Activated T-helper 2 cell treated with anti-CD3 and anti-CD28 coated beads, Interferon-gamma antibody, Interleukin-2, Interleukin-4, amounts not matched to agents 10 μg/mL and 5 μg/mL and 100 μg/mL, durations not matched to agents 14 hours and 24 hours and 36 hours (primary cell): ENCODE measurements at regions of chr3 and their contacts with region 1.

Region 1: DNA sequence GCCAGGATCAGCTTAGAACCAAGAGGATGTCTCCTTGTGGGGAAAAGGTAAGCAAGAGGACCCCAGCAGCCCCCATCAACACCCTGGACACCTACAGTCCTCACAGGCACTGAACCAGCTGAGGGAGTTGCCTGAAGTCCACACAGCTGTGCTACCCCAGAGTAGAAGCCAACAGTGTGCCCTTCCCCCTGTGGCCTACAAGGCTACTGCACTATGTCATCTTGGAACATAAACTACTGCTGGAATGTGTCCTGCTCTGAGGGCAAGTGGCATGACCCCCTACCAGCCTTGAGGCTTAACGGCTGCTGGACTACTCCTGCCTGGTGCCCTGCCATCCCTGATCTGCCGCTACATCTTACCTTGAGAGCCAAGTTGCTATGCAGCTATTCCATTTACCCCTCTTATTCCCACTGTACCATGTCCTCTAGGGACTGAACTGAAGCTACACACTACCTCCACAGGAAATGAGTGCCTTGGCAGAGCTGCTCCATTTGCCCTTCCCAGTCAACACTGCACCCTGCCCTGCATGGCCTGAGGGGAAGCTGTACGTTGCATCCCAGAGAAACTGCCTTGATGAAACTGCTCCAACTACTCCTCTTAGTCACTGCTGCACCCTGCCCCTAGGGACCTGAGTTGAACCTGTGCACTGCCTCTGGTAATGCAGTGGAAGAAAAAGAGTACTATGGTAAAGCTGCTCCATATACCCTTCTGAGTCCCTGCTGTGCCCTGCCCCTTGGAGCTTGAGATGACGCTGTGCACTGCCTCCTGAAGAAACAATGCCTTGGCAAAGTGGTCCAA is 40.2 kb upstream of the ATP13A5 start:
- DNase-seq: no peak
- H3K4me3 Mint-ChIP-seq: no peak overlapping the region
- H3K27ac Mint-ChIP-seq: no peak overlapping the region
- H3K4me1 Mint-ChIP-seq: no peaks in the 10 kb centered on the region
- H3K27me3 Mint-ChIP-seq: no peaks in the 10 kb centered on the region

Region 2: GRCh38 chr3:193367868-193368267 is 50.9 kb before region 1 on chr3:
- intact Hi-C with region 1: loop called (anchors 10 kb)
- DNase-seq: no peak
- H3K4me3 Mint-ChIP-seq: no peak overlapping the region
- H3K27ac Mint-ChIP-seq: no peak overlapping the region
- H3K4me1 Mint-ChIP-seq: peaks cover 5% of the 10 kb centered on the region
- H3K27me3 Mint-ChIP-seq: peaks cover 18% of the 10 kb centered on the region

Region 3: GRCh38 chr3:193378706-193379105 is 40.1 kb before region 1 on chr3 and contains the start of gene ATP13A5:
- intact Hi-C with region 1: no loop called
- DNase-seq: no peak
- H3K4me3 Mint-ChIP-seq: no peak within 1 kb of the TSS
- H3K27ac Mint-ChIP-seq: no peak within 1 kb of the TSS
- H3K4me1 Mint-ChIP-seq: no peaks in the 10 kb centered on the region
- H3K27me3 Mint-ChIP-seq: peaks cover 21% of the 10 kb centered on the region
- total RNA-seq, gene ATP13A5: not detected in 2 replicates